Sigmoid colon (tissue), 7 donors: ENCODE measurements at regions of chr17 and their contacts with region 1.

Region 1: DNA sequence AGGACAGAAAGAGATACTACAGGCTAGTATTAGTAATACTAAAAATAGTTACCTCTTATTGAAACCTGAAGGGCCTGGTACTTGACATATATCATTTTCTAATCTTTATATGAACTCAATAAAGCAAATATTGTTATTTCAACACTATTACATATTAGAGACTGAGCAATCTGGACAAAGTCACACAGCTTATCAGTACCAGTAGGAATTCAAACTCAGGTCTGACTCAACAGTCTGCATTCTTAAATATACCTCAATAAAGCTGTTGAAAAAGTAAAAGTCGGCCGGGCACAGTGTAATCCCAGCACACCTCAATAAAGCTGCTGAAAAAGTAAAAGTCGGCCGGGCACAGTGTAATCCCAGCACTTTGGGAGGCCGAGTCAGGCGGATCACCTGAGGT is 67.4 kb downstream of the KANSL1 start:
- DNase-seq: no peak
- H3K4me3 ChIP-seq: no peak overlapping the region
- H3K27ac ChIP-seq: no peak overlapping the region
- H3K4me1 ChIP-seq: peaks cover 0 to 95% (median 94%) of the 10 kb centered on the region in 4 donors
- H3K27me3 ChIP-seq: no peaks in the 10 kb centered on the region
- CTCF ChIP-seq: no peak
- EP300 ChIP-seq: no peak
- POLR2A ChIP-seq: no peak

Region 2: DNA sequence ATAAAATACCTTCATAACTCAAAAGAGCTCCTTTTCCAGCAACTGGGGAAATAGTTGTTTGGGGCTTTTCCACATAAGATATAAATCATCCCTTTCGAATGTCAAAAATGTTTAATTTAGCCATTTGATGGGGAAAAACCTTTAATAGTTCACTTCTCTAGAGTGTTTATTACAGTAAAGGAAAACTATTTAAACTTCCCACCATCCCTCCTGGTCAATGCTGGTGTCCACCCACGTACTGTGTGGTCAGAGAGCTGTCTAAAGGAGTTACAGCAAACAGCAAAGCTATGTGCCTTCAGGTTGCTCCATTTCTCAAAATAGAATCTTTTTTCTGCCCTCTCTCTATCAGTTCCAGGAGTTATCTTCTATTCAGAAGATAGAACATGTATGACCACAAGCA is 33.9 kb after region 1 on chr17:
- intact Hi-C with region 1: loop called (anchors 5 kb)
- DNase-seq: no peak
- H3K4me3 ChIP-seq: no peak overlapping the region
- H3K27ac ChIP-seq: peak overlapping the region in 3 of 4 donors; percentile 32 to 77 (median 62)
- H3K4me1 ChIP-seq: peaks cover 2 to 92% (median 87%) of the 10 kb centered on the region in 4 donors
- H3K27me3 ChIP-seq: no peaks in the 10 kb centered on the region
- CTCF ChIP-seq: no peak
- EP300 ChIP-seq: no peak
- POLR2A ChIP-seq: no peak